Transverse colon (tissue), 4 donors: ENCODE measurements at regions of chr20 and their contacts with region 1.

Region 1: DNA sequence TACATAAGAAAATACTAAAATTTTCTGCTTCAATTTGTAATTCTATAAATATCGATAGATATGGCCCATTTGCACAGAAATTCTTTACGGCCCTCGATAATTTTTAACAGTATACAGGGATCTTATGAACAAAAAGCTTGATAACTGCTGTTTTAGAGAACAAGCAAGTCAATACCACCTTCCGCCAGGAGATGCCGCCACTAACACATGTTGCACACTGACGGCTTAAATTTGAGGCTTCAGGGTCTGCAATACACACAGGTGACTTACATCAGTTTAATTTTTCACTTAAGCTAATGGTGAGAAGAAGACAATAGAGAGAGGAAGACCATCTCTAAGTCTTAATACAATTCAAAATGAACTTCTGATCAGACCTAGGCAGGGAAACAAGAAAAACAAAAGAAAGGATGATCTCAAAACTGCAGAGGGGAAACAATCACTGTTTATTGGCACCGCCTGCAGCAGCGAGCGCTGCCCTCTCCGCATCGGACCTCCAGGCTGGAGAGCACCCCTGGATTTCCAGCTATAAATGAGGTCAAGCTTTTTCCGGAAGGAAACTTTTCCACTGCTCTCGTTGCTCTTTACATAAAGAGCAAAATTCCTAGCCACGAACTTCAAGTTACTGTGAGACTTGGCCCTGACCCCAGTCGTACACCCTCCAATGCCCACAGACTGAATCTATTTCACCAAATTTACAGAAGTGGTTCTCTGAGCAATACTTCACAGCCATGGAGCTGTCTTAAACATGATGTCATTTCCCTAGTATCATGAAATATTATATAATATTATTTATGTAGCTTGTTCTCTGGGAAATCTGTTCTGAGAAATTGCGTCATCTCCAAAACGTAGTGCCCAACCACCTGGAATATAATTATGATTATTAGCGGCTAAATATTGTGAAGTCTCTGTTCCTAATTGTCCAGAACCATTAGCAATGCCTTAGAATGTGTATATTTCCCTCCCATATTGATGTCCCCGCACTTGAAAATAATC is 54.1 kb downstream of the OTOR start:
- DNase-seq: peak; percentile 59
- H3K4me3 ChIP-seq: no peak overlapping the region
- H3K27ac ChIP-seq: no peak overlapping the region
- H3K4me1 ChIP-seq: no peaks in the 10 kb centered on the region
- H3K27me3 ChIP-seq: peaks cover 38% of the 10 kb centered on the region
- CTCF ChIP-seq: peak; percentile 53 to 83 (median 78)
- EP300 ChIP-seq: no peak
- POLR2A ChIP-seq: no peak

Region 2: GRCh38 chr20:16175322-16175957 is 626.8 kb before region 1 on chr20:
- in situ Hi-C with region 1: no loop called
- intact Hi-C with region 1: no loop called
- DNase-seq: no peak
- H3K4me3 ChIP-seq: no peak overlapping the region
- H3K27ac ChIP-seq: no peak overlapping the region
- H3K4me1 ChIP-seq: no peaks in the 10 kb centered on the region
- H3K27me3 ChIP-seq: no peaks in the 10 kb centered on the region
- CTCF ChIP-seq: no peak
- EP300 ChIP-seq: no peak
- POLR2A ChIP-seq: no peak

Region 3: GRCh38 chr20:17421493-17421892 is 619.3 kb after region 1 on chr20:
- in situ Hi-C with region 1: loop called in 3 of 4 experiments (anchors 10 kb)
- intact Hi-C with region 1: no loop called
- DNase-seq: no peak
- H3K4me3 ChIP-seq: no peak overlapping the region
- H3K27ac ChIP-seq: no peak overlapping the region
- H3K4me1 ChIP-seq: no peaks in the 10 kb centered on the region
- H3K27me3 ChIP-seq: no peaks in the 10 kb centered on the region
- CTCF ChIP-seq: no peak
- EP300 ChIP-seq: no peak
- POLR2A ChIP-seq: no peak

Region 4: GRCh38 chr20:17431621-17432364 is 629.6 kb after region 1 on chr20:
- in situ Hi-C with region 1: loop called (anchors 5 to 10 kb)
- intact Hi-C with region 1: loop called (anchors 2 kb)
- DNase-seq: peak; percentile 34
- H3K4me3 ChIP-seq: no peak overlapping the region
- H3K27ac ChIP-seq: no peak overlapping the region
- H3K4me1 ChIP-seq: peaks cover 0 to 7% (median 0%) of the 10 kb centered on the region in 4 donors
- H3K27me3 ChIP-seq: peaks cover 18% of the 10 kb centered on the region
- CTCF ChIP-seq: peak; percentile 71 to 93 (median 86)
- EP300 ChIP-seq: no peak
- POLR2A ChIP-seq: no peak

Region 5: GRCh38 chr20:17438436-17439039 is 636.3 kb after region 1 on chr20:
- in situ Hi-C with region 1: loop called in 1 of 4 experiments (anchors 5 kb)
- intact Hi-C with region 1: loop called (anchors 2 kb)
- DNase-seq: no peak
- H3K4me3 ChIP-seq: no peak overlapping the region
- H3K27ac ChIP-seq: no peak overlapping the region
- H3K4me1 ChIP-seq: no peaks in the 10 kb centered on the region
- H3K27me3 ChIP-seq: no peaks in the 10 kb centered on the region
- CTCF ChIP-seq: no peak
- EP300 ChIP-seq: no peak
- POLR2A ChIP-seq: no peak